ENCODE measurements at regions of chr9 and their contacts with region 1.

Region 1: DNA sequence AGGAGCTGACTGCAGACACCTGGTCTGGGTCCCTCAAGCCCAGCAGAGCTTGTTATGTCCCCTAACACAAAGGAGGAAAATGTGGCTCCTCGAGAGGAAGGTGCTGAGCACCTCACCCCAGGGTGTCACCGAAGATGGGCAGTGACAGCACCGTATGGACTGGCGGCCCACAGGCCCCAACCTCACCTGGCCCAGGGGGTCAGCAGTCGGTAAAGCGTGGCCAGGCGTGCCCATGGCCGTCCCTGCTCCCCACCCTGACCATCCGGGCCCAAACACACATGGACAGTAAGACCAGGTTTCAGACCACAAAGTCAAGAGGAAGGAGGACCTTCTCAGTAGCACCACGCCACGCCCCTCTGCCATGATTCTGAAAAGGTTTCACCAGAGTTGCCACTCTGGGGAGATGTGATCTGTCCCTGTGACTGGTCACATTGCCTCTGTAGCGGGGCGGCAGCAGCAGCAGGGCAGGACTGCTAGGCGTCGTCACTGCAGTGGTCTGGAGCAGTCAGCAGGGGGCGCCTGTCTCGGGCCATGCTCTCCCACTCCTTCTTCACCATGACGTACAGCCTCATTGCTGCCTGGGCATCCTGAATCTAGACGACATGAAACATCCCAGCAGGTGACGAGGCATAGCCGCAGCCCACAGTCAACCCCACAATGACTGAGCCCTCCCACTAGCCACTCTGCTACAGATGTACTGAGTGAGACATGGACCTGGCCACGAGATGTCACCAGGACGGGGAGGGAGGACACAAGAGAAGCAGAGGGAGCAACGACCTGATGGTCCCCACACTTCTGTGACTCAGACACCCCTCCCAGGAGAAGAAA is 11.1 kb downstream of the REXO4 start:
- DNase-seq: peak; percentile 75 to 82 (median 76)
- H3K4me3 ChIP-seq: no peak overlapping the region
- H3K4me3 Mint-ChIP-seq: no peak overlapping the region
- H3K27ac ChIP-seq: peak overlapping the region; percentile 18
- H3K27ac Mint-ChIP-seq: peak overlapping the region; percentile 28 to 94 (median 83)
- H3K4me1 ChIP-seq: peaks cover 5% of the 10 kb centered on the region
- H3K4me1 Mint-ChIP-seq: peaks cover 7 to 11% (median 8%) of the 10 kb centered on the region in 4 donors
- H3K27me3 ChIP-seq: no peaks in the 10 kb centered on the region
- H3K27me3 Mint-ChIP-seq: no peaks in the 10 kb centered on the region

Region 2: DNA sequence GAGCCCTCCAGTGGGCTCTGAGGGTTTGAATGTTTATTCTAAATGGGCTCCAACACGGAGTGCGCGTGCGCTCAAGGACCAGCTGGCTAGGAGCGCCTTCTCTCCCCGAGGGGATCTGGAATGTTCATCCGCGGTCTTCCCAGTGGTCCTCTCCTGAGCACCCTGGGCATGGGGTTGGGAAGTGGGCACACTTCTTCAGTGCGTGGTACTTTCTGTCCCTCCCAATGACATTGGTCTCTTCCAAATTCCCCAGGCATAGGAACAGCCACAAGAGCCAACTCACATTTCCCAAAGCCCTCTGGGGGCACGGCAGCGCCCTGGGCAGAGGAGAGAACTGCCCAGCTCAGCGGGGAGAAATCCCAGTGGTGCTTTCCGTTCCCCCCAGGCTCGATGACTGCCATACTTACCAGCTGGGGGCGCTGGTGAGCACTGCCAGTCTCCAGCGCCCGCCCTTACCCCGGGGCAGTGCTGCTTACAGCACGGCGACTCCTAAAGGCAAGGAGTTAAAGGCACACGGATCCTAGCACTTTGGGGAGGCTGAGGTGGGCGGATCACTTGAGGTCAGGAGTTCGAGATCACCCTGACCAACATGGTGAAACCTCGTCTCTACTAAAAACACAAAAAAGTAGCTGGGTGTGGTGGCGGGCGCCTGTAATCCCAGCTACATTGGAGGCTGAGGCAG is 167.7 kb before region 1 on chr9:
- CTCF ChIA-PET with region 1: interaction called, 5 read pairs
- POLR2A ChIA-PET with region 1: no interaction called
- intact Hi-C with region 1: loop called (anchors 1 kb)
- DNase-seq: peak; percentile 53 to 62 (median 56)
- H3K4me3 ChIP-seq: no peak overlapping the region
- H3K4me3 Mint-ChIP-seq: peak overlapping the region in 6 of 8 donors; percentile 17 to 65 (median 46)
- H3K27ac ChIP-seq: peak overlapping the region; percentile 2
- H3K27ac Mint-ChIP-seq: no peak overlapping the region
- H3K4me1 ChIP-seq: peaks cover 13% of the 10 kb centered on the region
- H3K4me1 Mint-ChIP-seq: peaks cover 0 to 17% (median 11%) of the 10 kb centered on the region in 4 donors
- H3K27me3 ChIP-seq: no peaks in the 10 kb centered on the region
- H3K27me3 Mint-ChIP-seq: peaks cover 11 to 12% of the 10 kb centered on the region in 2 donors

Region 3: DNA sequence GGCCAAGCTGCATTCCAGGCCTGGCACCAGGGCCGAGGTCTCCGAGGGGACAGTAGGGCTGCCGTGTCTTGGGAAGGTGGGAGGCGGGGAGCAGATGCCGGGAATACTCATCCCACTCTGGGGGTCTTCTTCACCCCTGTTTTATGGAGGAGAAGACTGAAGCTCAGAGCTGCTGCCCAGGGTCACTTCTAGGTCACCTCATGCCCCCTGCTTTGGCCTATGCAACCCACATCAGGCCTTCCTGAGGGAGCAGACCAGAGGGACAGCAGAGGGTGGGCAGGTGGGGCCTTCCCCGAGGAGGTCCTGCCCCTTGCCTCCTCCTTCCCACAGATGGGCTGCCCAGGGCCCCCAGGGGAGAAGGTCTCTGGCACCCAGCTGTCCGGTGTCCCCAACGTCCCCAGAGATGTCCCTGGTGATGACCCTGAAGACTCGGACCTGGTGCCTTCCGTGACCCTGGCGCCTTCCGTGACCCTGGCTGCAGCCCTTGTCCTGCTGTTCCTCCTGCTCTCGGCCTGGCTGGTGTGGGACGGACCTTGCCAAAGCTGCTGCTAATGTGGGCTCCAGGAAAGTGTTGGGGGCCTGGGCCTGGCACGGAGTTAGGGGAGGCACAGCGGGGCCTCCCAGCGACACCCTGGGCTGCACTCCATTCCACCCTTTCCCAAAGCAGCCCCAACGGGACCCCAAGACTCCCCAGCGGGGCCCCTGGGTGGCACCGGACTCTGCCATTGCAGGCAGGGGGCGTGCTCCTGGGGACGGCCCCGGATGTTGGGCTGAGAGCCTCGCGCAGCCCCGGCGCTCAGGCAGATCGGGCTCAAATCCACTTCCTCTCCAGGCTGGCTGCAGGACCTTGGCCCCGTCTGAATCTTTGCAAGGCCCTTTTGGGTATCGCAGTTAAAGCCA is 78.9 kb after region 1 on chr9:
- CTCF ChIA-PET with region 1: interaction called, 20 read pairs
- POLR2A ChIA-PET with region 1: no interaction called
- intact Hi-C with region 1: loop called (anchors 1 kb)
- DNase-seq: no peak
- H3K4me3 ChIP-seq: peak overlapping the region in 1 of 2 donors; percentile 6
- H3K4me3 Mint-ChIP-seq: no peak overlapping the region
- H3K27ac ChIP-seq: no peak overlapping the region
- H3K27ac Mint-ChIP-seq: no peak overlapping the region
- H3K4me1 ChIP-seq: peaks cover 5% of the 10 kb centered on the region
- H3K4me1 Mint-ChIP-seq: peaks cover 0 to 4% (median 0%) of the 10 kb centered on the region in 4 donors
- H3K27me3 ChIP-seq: no peaks in the 10 kb centered on the region
- H3K27me3 Mint-ChIP-seq: peaks cover 7 to 14% of the 10 kb centered on the region in 2 donors

Region 4: GRCh38 chr9:133782157-133783130 is 375.8 kb after region 1 on chr9:
- CTCF ChIA-PET with region 1: no interaction called
- POLR2A ChIA-PET with region 1: no interaction called
- intact Hi-C with region 1: no loop called
- DNase-seq: peak; percentile 41 to 52 (median 47)
- H3K4me3 ChIP-seq: no peak overlapping the region
- H3K4me3 Mint-ChIP-seq: peak overlapping the region in 1 of 8 donors; percentile 20
- H3K27ac ChIP-seq: no peak overlapping the region
- H3K27ac Mint-ChIP-seq: no peak overlapping the region
- H3K4me1 ChIP-seq: no peaks in the 10 kb centered on the region
- H3K4me1 Mint-ChIP-seq: no peaks in the 10 kb centered on the region
- H3K27me3 ChIP-seq: no peaks in the 10 kb centered on the region
- H3K27me3 Mint-ChIP-seq: peaks cover 0 to 2% of the 10 kb centered on the region in 2 donors

Measured in CD4-positive, alpha-beta memory T cell (primary cell).